ENCODE measurements at regions of chr7 and their contacts with region 1.

Region 1: DNA sequence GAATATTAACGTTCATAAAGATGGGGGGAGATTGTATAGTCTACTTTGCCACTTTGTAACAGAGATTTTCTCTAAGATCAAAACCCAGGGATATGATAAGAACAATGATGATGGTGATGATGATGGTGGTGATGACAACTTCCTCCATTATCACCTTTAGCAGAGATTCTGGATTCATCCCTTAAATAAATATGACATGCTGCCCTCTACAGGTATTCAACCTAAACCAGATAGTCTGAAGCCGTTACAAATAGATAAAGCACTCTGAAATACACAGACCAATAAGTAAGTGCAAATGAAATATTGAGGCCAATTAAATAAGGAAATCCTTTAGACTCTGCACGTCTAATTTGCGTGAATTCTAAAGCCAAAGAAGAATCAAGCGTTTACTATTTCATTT is 211.5 kb downstream of the CREB5 start:
- DNase-seq: no peak
- ATAC-seq: peak in 3 of 4 donors; percentile 48 to 67 (median 48)
- H3K4me3 ChIP-seq: no peak overlapping the region
- H3K27ac ChIP-seq: no peak overlapping the region
- H3K4me1 ChIP-seq: no peaks in the 10 kb centered on the region
- H3K27me3 ChIP-seq: no peaks in the 10 kb centered on the region
- CTCF ChIP-seq: peak in 3 of 4 donors; percentile 34 to 44 (median 37)
- POLR2A ChIP-seq: no peak

Region 2: DNA sequence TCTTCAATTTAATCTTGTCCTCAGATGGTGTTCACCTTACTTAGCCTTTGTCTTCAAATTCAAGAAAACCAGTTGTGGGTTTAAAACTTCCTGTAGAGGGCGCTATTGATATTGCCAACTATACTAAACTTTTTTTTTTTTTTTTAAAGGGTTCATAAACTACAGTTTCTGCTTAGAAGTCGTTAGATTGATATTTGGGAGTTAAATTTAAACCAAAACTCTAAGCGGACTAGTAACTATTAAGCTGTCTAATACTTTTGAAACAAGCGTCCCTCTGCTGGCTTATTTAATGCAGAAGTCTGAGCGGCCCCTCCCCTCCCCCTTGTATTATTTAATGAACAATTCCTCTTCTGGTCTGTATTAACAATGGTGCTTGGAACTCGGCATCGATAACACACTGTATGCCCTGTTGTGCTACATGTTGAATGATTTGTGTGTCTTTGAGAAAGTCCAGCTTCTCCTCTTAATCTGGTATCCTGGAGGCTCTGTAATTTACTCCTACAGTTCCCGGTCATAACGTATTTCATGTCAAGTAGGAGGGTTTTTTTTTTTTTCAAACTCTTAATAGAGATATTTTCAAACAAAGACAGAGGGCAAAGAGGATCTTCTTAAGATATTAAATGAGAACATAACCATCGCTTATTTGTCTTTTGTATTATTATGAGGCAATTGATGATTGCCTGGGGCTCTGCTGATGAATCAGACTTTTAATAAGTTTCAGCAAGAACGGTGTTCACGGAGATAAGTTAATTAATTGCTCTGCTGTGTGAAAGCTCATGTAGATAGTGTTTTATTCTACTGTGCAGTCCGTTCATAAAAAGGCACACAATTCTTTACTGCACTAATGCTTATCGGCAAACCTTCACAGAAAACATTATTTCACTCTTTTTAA is 234.1 kb before region 1 on chr7:
- intact Hi-C with region 1: loop called in 1 of 2 experiments (anchors 5 kb)
- DNase-seq: no peak
- ATAC-seq: peak in 2 of 4 donors; percentile 56 to 64
- H3K4me3 ChIP-seq: no peak overlapping the region
- H3K27ac ChIP-seq: no peak overlapping the region
- H3K4me1 ChIP-seq: no peaks in the 10 kb centered on the region
- H3K27me3 ChIP-seq: peaks cover 0 to 10% of the 10 kb centered on the region in 2 donors
- CTCF ChIP-seq: peak; percentile 53 to 85 (median 66)
- POLR2A ChIP-seq: no peak

Measured in right lobe of liver (tissue), 6 donors.